ENCODE measurements at regions of chr20 and their contacts with region 1.

Region 1: DNA sequence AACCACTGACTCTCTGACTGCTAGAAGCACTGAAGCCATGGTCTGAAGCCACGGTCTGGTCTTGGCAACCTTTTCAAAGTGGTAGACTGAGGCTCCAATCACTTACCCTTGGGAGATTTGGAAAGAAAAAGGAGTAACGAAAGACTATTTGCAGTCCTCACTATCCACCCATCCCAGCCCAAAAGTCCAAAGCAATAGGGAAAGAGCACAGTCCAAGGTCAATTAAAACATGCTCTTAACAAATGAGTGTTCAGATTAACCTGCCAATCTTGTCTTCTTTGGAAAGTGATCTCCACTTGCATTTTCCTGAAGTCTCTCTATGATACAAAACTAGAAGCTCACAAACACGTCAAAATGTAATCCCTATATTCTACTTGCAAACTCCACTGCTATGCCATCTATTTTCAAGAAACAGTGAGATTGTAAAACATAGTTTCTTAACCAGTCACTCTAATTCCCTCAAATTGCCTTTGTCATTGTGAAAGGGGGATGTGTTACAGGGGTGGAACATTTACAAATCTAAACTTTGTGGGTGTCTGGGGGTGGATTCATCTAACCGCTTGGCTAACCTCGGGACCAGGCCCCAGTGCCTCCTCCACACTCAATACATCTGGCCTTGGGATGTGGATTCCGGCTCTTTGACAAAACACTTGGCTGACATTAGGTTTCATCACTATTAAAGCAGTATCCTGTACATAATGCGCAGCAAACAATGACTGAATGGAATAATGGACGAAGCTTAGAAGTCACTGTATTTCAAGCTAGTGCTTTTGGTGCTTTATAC is 56.4 kb downstream of the B4GALT5 start:
- DNase-seq: no peak
- H3K4me3 ChIP-seq: no peak overlapping the region
- H3K4me3 Mint-ChIP-seq: no peak overlapping the region
- H3K27ac ChIP-seq: no peak overlapping the region
- H3K27ac Mint-ChIP-seq: peak overlapping the region in 1 of 7 donors; percentile 75
- H3K4me1 ChIP-seq: peaks cover 4% of the 10 kb centered on the region
- H3K4me1 Mint-ChIP-seq: peaks cover 3 to 13% (median 8%) of the 10 kb centered on the region in 4 donors
- H3K27me3 ChIP-seq: no peaks in the 10 kb centered on the region
- H3K27me3 Mint-ChIP-seq: no peaks in the 10 kb centered on the region

Region 2: DNA sequence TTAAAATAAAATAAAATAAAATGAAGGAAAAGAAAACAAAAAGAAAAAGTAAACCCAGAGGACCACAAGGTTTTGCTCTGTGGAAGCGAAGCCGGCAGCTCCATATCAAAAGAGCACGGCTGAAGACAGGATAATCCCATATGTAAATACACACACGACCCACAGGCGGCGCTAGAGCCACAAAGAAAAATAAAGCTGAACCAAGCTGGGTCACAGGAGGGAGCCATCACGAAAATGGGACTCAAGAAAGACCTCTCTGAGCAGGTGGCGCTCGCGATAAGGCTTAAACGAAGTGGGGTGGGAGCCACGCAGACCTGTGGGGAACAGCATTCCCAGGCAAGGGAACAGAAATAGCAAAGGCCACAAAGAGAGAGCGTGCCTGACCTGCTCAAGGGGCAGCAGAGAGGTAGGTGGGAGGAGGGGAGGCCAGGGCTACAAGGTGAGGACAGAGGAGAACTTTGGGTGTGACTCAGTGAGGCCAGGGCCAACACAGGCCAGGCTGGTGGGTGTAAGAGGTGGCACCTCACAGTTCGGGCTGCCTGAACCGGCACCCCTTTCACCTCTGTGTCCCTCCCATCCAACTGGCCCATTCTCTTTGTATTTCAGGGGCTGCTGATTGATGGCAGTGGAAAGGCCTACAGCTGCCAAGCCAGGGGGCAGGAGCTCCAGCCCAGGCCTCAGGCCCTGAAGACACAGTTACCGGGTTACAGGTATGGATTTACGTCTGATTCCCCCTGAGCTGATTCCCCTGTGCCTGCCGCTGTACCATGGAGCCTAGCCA is 115.4 kb before region 1 on chr20:
- CTCF ChIA-PET with region 1: no interaction called
- POLR2A ChIA-PET with region 1: no interaction called
- intact Hi-C with region 1: no loop called
- DNase-seq: peak; percentile 46 to 53 (median 52)
- H3K4me3 ChIP-seq: no peak overlapping the region
- H3K4me3 Mint-ChIP-seq: no peak overlapping the region
- H3K27ac ChIP-seq: no peak overlapping the region
- H3K27ac Mint-ChIP-seq: peak overlapping the region in 1 of 7 donors; percentile 62
- H3K4me1 ChIP-seq: no peaks in the 10 kb centered on the region
- H3K4me1 Mint-ChIP-seq: peaks cover 0 to 5% (median 1%) of the 10 kb centered on the region in 4 donors
- H3K27me3 ChIP-seq: no peaks in the 10 kb centered on the region
- H3K27me3 Mint-ChIP-seq: peaks cover 2 to 4% of the 10 kb centered on the region in 2 donors

Region 3: DNA sequence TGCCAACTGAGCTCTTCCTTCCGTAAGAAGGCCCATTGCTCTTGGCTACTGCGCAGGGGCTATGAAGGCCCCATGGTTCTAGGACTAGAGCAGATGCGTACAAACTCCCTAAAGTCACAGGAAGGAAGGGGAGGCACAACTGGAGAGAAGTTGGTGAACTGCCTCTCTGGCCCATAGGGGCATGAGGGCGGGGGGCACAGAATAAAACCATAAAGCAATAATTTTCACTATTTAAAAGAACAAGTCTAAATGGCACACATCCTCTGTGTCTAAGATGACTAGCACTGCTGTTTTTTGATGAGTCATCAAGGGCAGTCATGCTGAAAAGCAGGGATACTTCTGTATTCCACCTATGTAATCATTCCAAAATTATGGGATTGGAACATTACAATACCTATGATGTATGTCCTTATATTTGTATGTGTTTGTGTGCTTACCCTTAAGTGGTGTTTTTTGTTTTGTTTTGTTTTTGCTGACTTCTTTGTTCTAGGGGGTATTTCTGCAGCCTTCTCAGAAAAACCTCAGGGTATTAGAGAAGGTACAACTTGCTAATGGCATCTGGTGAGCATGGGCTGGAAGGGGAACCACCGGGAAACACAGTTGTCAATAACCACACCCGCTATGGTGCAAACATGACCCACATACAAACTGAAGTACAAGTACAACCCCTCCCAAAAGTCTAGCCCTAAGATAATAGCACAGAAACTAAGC is 19.4 kb after region 1 on chr20:
- CTCF ChIA-PET with region 1: interaction called, 3 read pairs
- POLR2A ChIA-PET with region 1: interaction called, 11 read pairs
- intact Hi-C with region 1: no loop called
- DNase-seq: peak; percentile 52 to 83 (median 75)
- H3K4me3 ChIP-seq: no peak overlapping the region
- H3K4me3 Mint-ChIP-seq: peak overlapping the region in 7 of 8 donors; percentile 40 to 80 (median 69)
- H3K27ac ChIP-seq: peak overlapping the region; percentile 42
- H3K27ac Mint-ChIP-seq: peak overlapping the region; percentile 82 to 93 (median 88)
- H3K4me1 ChIP-seq: peaks cover 77% of the 10 kb centered on the region
- H3K4me1 Mint-ChIP-seq: peaks cover 42 to 88% (median 70%) of the 10 kb centered on the region in 4 donors
- H3K27me3 ChIP-seq: no peaks in the 10 kb centered on the region
- H3K27me3 Mint-ChIP-seq: no peaks in the 10 kb centered on the region

Measured in CD4-positive, alpha-beta memory T cell (primary cell).